ENCODE measurements at regions of chr19 and their contacts with region 1.

Region 1: DNA sequence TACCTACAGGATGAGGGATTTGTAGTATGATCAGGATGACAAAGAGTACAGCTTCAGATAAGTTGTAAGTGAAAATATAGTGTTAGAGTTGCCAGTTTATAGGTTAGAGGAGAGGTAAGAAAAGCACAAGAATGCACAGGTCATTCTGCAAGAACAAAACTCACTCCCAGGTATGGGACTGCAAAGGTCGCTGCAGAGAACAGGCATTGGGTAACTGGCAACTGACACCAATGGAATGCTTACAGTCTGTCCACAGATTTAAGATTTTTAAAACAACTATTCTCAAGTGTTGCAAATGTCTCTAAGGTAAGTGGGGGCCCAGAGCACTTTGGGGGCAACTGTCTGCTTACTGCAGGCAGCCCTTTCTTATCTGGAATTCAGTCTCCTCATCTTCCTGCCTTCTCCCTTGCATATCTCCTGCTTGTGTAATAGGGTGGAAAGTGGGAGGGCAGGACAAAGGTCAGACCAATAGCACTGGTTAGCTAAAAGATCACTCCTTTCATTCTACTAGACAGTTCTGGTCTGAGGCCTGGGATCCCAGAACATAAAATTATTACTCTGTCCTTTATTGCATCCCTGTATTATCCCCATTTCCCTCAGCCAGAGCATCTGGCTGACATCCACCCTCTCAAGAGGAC is 42.3 kb upstream of the ZNF726 start:
- DNase-seq: no peak
- H3K4me3 ChIP-seq: no peak overlapping the region
- H3K27ac ChIP-seq: no peak overlapping the region
- H3K4me1 ChIP-seq: no peaks in the 10 kb centered on the region
- H3K27me3 ChIP-seq: no peaks in the 10 kb centered on the region
- CTCF ChIP-seq: no peak

Region 2: GRCh38 chr19:23969630-23970029 is 97.2 kb after region 1 on chr19:
- intact Hi-C with region 1: loop called (anchors 5 kb)
- DNase-seq: no peak
- H3K4me3 ChIP-seq: no peak overlapping the region
- H3K27ac ChIP-seq: no peak overlapping the region
- H3K4me1 ChIP-seq: no peaks in the 10 kb centered on the region
- H3K27me3 ChIP-seq: peaks cover 2% of the 10 kb centered on the region
- CTCF ChIP-seq: no peak

Measured in kidney (tissue), 22 donors.